ENCODE measurements at regions of chr18 and their contacts with region 1.

Region 1: DNA sequence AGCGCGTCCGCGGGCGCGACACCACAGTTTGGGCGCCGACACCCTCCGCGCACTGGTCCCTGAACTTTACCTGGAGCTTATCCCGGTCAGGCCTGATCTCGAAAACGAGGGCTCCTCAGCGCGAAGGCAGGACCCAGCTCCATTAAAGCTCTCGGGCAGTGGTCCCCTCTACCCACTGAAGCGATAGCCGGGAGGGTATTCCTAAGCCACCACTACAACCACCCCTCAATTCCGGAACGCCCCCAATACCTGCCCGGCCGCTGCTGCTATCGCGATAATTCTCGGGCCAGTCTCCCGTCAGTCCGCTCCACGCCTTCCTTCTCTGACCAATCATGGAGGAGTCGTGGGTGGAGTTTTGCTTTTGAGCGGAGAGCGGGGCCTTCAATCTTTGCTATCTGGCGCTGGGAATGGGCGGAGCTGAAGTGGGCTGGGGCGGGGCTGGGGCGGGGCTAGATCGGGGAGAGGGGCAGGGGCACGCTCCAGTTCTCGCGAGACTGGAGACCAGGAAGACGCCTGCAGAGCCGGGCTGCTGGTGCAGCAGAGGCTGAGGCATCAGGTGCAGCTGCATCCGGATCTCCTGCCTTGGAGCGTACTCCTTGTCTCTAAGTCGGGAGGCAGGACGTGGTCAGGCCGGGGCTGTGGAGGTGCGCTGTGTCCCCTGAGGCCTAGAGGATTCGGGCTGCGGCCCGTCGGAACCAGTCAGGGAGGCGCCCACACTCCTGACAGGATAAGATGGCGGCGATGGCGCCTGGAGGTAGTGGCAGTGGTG is at the starts of genes PIGN and RELCH:
- DNase-seq: peak; percentile 97 to 98 (median 97)
- H3K4me3 ChIP-seq: peak within 1 kb of the TSS; percentile 89 to 100 (median 90)
- H3K4me3 Mint-ChIP-seq: peak within 1 kb of the TSS; percentile 99 to 100
- H3K27ac ChIP-seq: peak within 1 kb of the TSS; percentile 71 to 95
- H3K27ac Mint-ChIP-seq: peak within 1 kb of the TSS; percentile 94 to 98 (median 97)
- H3K4me1 ChIP-seq: peaks cover 36 to 58% of the 10 kb centered on the region in 2 donors
- H3K4me1 Mint-ChIP-seq: peaks cover 60% of the 10 kb centered on the region
- H3K27me3 ChIP-seq: no peaks in the 10 kb centered on the region
- H3K27me3 Mint-ChIP-seq: no peaks in the 10 kb centered on the region
- CTCF ChIP-seq: no peak
- polyA plus RNA-seq, gene PIGN: 4.1 to 14.7 (median 14.6) TPM
- polyA plus RNA-seq, gene RELCH: 3.8 to 30.4 (median 4.9) TPM

Region 2: GRCh38 chr18:61825386-61825785 is 361.6 kb before region 1 on chr18:
- intact Hi-C with region 1: no loop called
- DNase-seq: no peak
- H3K4me3 ChIP-seq: no peak overlapping the region
- H3K4me3 Mint-ChIP-seq: no peak overlapping the region
- H3K27ac ChIP-seq: no peak overlapping the region
- H3K27ac Mint-ChIP-seq: no peak overlapping the region
- H3K4me1 ChIP-seq: no peaks in the 10 kb centered on the region
- H3K4me1 Mint-ChIP-seq: no peaks in the 10 kb centered on the region
- H3K27me3 ChIP-seq: peaks cover 54 to 65% of the 10 kb centered on the region in 2 donors
- H3K27me3 Mint-ChIP-seq: peaks cover 40 to 68% (median 51%) of the 10 kb centered on the region in 3 donors
- CTCF ChIP-seq: no peak

Region 3: DNA sequence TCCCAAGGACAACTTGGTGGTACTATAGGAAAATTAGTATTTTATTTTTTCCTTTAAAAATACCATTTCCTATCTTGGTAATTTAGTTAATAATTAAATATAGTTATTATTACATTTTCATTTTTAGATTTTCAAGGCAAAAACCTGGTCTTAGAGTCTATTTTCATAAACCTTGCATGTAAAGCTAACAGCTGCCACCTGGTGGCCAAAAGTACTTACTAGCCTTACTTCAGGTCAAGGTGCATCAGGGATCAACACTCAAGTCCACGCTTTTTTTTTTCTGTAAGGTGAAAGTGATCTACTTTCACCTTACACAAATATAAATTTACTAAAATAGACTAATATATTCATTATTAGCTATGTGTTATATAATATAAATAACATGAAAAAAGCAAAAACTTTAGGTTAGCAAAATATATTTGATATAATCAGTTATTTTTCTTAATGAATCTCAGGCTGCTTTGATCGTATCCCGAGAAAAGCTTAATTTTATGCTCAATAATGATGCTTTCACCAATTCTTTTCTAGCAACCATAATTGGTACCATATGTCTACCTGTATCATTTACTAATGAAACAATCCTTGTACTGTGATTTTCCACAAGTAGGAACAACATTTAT is 62.6 kb after region 1 on chr18:
- intact Hi-C with region 1: loop called (anchors 5 kb)
- DNase-seq: peak; percentile 34 to 70 (median 60)
- H3K4me3 ChIP-seq: no peak overlapping the region
- H3K4me3 Mint-ChIP-seq: no peak overlapping the region
- H3K27ac ChIP-seq: no peak overlapping the region
- H3K27ac Mint-ChIP-seq: no peak overlapping the region
- H3K4me1 ChIP-seq: no peaks in the 10 kb centered on the region
- H3K4me1 Mint-ChIP-seq: no peaks in the 10 kb centered on the region
- H3K27me3 ChIP-seq: no peaks in the 10 kb centered on the region
- H3K27me3 Mint-ChIP-seq: no peaks in the 10 kb centered on the region
- CTCF ChIP-seq: peak; percentile 90

Region 4: DNA sequence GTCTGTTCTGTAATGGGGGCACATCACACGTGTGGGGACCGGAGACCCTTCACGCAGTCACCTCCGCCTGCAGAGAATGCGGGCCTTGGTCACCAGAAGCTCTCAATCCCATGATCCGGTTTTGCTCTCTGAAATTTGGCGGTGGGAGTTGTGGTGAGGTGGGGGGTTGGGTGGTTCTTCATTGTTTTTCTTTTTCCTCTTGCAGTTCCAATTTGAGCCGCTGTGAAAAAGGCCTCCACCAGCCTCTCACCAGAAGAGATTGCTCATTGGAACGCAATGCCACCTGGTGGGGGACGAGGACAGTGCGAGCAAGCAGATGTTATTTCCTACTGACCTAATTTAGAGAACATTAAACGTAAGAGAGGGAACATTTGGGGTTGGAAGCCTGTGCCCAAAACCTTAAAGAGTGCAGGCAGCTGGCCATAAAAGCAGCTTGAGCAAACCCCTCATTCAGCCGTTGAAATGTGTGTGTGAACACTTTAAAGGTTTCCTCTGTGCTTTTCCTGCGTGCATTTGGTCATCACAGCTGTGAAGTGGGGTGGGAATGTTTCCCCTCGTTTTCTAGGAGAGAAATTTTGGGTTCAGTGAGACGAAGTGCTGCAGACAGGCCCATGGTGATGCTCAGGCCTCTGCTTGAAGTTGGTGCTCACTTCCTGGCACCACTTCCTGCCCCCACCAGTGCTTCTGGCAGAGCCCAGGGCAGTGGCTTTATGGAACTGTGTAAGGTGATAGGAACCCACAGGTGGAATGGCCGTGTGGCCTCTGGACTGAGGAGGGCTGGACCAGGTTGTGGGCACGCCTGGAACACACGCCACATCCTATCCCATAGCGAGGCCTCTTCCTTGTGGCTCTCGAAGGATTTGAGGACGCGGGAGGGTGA is 397.5 kb after region 1 on chr18:
- intact Hi-C with region 1: loop called in 1 of 2 experiments (anchors 10 kb)
- DNase-seq: peak; percentile 72 to 82 (median 73)
- H3K4me3 ChIP-seq: peak overlapping the region in 1 of 3 experiments; percentile 52
- H3K4me3 Mint-ChIP-seq: peak overlapping the region; percentile 48 to 71
- H3K27ac ChIP-seq: peak overlapping the region; percentile 11 to 32
- H3K27ac Mint-ChIP-seq: peak overlapping the region in 3 of 7 donors; percentile 70 to 80 (median 70)
- H3K4me1 ChIP-seq: peaks cover 12 to 23% of the 10 kb centered on the region in 2 donors
- H3K4me1 Mint-ChIP-seq: peaks cover 30% of the 10 kb centered on the region
- H3K27me3 ChIP-seq: no peaks in the 10 kb centered on the region
- H3K27me3 Mint-ChIP-seq: peaks cover under 1 to 7% (median 4%) of the 10 kb centered on the region in 3 donors
- CTCF ChIP-seq: peak; percentile 94